Caco-2 (cell line): ENCODE measurements at regions of chr3 and their contacts with region 1.

Region 1: GRCh38 chr3:100068826-100069225 is 45.5 kb downstream of the FILIP1L start:
- DNase-seq: peak; percentile 70 to 80
- H3K4me3 ChIP-seq: no peak overlapping the region
- H3K4me3 Mint-ChIP-seq: no peak overlapping the region
- H3K27ac Mint-ChIP-seq: no peak overlapping the region
- H3K4me1 ChIP-seq: peaks cover 21% of the 10 kb centered on the region
- H3K4me1 Mint-ChIP-seq: peaks cover 6% of the 10 kb centered on the region
- H3K27me3 ChIP-seq: no peaks in the 10 kb centered on the region
- H3K27me3 Mint-ChIP-seq: no peaks in the 10 kb centered on the region
- CTCF ChIP-seq: peak; percentile 50 to 63

Region 2: GRCh38 chr3:100184948-100185570 is 116.2 kb after region 1 on chr3:
- CTCF ChIA-PET with region 1: no interaction called
- POLR2A ChIA-PET with region 1: no interaction called
- intact Hi-C with region 1: loop called (anchors 5 kb)
- DNase-seq: no peak
- H3K4me3 ChIP-seq: no peak overlapping the region
- H3K4me3 Mint-ChIP-seq: no peak overlapping the region
- H3K27ac Mint-ChIP-seq: no peak overlapping the region
- H3K4me1 ChIP-seq: no peaks in the 10 kb centered on the region
- H3K4me1 Mint-ChIP-seq: no peaks in the 10 kb centered on the region
- H3K27me3 ChIP-seq: no peaks in the 10 kb centered on the region
- H3K27me3 Mint-ChIP-seq: no peaks in the 10 kb centered on the region
- CTCF ChIP-seq: no peak